ENCODE measurements at regions of chr10 and their contacts with region 1.

Region 1: GRCh38 chr10:60769406-60769805 is 8.9 kb upstream of the CDK1 start:
- DNase-seq: no peak
- ATAC-seq: no peak
- H3K4me3 ChIP-seq: no peak overlapping the region
- H3K4me3 Mint-ChIP-seq: no peak overlapping the region
- H3K27ac ChIP-seq: no peak overlapping the region
- H3K27ac Mint-ChIP-seq: no peak overlapping the region
- H3K4me1 ChIP-seq: no peaks in the 10 kb centered on the region
- H3K4me1 Mint-ChIP-seq: peaks cover 0 to 20% (median 14%) of the 10 kb centered on the region in 7 donors
- H3K27me3 ChIP-seq: no peaks in the 10 kb centered on the region
- H3K27me3 Mint-ChIP-seq: peaks cover 0 to 6% (median 0%) of the 10 kb centered on the region in 5 donors

Region 2: DNA sequence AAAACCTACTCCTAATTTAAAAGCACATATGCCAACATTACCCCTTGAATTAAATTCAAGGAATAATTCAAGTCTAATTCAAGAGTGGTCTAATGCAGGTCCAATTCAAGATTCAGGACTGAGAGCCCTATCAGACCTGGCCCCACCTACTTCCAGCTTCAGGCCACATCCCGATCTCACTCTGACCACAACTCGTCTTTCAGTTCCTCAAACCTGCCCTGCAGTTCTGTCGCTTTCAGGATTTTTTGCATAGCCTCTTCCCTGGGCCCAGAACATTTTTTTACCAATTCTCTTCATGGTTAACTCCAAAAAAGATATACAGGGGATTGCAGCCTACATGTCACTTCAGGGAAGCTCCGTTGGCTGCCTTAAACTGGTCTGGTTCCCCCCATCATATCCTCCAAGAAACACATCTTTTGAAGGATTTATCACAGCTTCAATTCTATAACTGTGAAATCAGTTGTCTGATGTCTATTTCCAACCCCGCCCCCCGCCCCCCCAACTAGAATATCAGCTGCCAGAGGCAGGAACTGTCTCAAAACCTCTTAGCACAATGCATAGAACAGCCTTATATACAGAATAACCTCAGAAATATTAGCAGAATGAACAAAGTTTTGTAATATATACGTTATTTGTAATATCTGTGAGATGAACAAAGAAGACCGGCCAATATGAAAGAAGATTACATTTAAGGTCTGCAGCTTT is 883.8 kb before region 1 on chr10:
- CTCF ChIA-PET with region 1: no interaction called
- POLR2A ChIA-PET with region 1: no interaction called
- intact Hi-C with region 1: no loop called
- DNase-seq: no peak
- ATAC-seq: peak; percentile 70
- H3K4me3 ChIP-seq: no peak overlapping the region
- H3K4me3 Mint-ChIP-seq: peak overlapping the region in 9 of 10 donors; percentile 11 to 66 (median 39)
- H3K27ac ChIP-seq: no peak overlapping the region
- H3K27ac Mint-ChIP-seq: peak overlapping the region in 4 of 9 donors; percentile 40 to 84 (median 62)
- H3K4me1 ChIP-seq: peaks cover 42 to 43% of the 10 kb centered on the region in 2 donors
- H3K4me1 Mint-ChIP-seq: peaks cover 56 to 90% (median 85%) of the 10 kb centered on the region in 7 donors
- H3K27me3 ChIP-seq: no peaks in the 10 kb centered on the region
- H3K27me3 Mint-ChIP-seq: no peaks in the 10 kb centered on the region

Region 3: GRCh38 chr10:60099998-60100747 is 669.2 kb before region 1 on chr10:
- CTCF ChIA-PET with region 1: interaction called, 4 read pairs
- POLR2A ChIA-PET with region 1: no interaction called
- intact Hi-C with region 1: loop called (anchors 1 to 2 kb)
- DNase-seq: peak in 6 of 9 donors; percentile 14 to 43 (median 31)
- ATAC-seq: peak; percentile 69
- H3K4me3 ChIP-seq: no peak overlapping the region
- H3K4me3 Mint-ChIP-seq: no peak overlapping the region
- H3K27ac ChIP-seq: no peak overlapping the region
- H3K27ac Mint-ChIP-seq: no peak overlapping the region
- H3K4me1 ChIP-seq: no peaks in the 10 kb centered on the region
- H3K4me1 Mint-ChIP-seq: no peaks in the 10 kb centered on the region
- H3K27me3 ChIP-seq: no peaks in the 10 kb centered on the region
- H3K27me3 Mint-ChIP-seq: no peaks in the 10 kb centered on the region

Region 4: GRCh38 chr10:60444494-60445064 is 324.8 kb before region 1 on chr10:
- CTCF ChIA-PET with region 1: interaction called, 3 read pairs
- POLR2A ChIA-PET with region 1: no interaction called
- intact Hi-C with region 1: loop called (anchors 1 kb)
- DNase-seq: no peak
- ATAC-seq: no peak
- H3K4me3 ChIP-seq: no peak overlapping the region
- H3K4me3 Mint-ChIP-seq: no peak overlapping the region
- H3K27ac ChIP-seq: no peak overlapping the region
- H3K27ac Mint-ChIP-seq: no peak overlapping the region
- H3K4me1 ChIP-seq: peaks cover 0 to 11% of the 10 kb centered on the region in 2 donors
- H3K4me1 Mint-ChIP-seq: peaks cover 12 to 34% (median 20%) of the 10 kb centered on the region in 7 donors
- H3K27me3 ChIP-seq: no peaks in the 10 kb centered on the region
- H3K27me3 Mint-ChIP-seq: no peaks in the 10 kb centered on the region

Region 5: GRCh38 chr10:60549686-60550085 is 219.7 kb before region 1 on chr10:
- CTCF ChIA-PET with region 1: no interaction called
- POLR2A ChIA-PET with region 1: no interaction called
- intact Hi-C with region 1: loop called (anchors 1 kb)
- DNase-seq: peak in 2 of 9 donors; percentile 11 to 25
- ATAC-seq: no peak
- H3K4me3 ChIP-seq: no peak overlapping the region
- H3K4me3 Mint-ChIP-seq: no peak overlapping the region
- H3K27ac ChIP-seq: no peak overlapping the region
- H3K27ac Mint-ChIP-seq: no peak overlapping the region
- H3K4me1 ChIP-seq: no peaks in the 10 kb centered on the region
- H3K4me1 Mint-ChIP-seq: peaks cover 0 to 8% (median 0%) of the 10 kb centered on the region in 7 donors
- H3K27me3 ChIP-seq: no peaks in the 10 kb centered on the region
- H3K27me3 Mint-ChIP-seq: no peaks in the 10 kb centered on the region

Region 6: DNA sequence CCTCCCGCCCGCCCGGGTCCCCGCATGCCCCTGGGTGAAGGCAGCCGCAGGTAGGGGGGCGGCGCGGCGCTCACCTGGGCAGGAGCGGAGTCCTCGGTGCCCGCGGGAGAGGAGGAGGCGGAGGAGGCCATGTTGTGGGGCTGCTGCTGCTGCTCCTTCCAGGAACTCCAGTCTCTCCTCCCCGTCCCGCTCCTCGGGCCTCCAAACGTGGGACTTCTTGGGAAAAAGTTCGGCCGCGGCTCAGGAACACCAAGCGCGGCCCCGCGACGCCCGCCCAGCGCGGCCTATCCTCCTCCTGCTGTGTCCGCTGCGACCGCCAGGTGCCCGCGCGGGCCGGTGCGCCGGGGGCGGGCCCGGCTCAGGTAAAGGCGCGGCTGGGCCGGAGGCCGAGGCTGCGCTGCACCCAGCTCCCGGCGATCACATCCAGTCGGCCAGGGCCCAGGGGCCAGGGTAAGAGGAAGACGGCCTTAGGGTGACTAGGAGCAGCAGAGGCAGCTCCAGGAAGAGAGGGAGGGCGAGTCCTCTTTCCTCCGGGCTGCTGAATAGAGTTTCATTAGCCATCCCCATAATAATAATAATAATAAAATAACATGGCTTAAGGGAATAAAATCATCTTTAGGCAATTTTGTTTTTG is 36.1 kb before region 1 on chr10:
- CTCF ChIA-PET with region 1: no interaction called
- POLR2A ChIA-PET with region 1: interaction called, 3 read pairs
- intact Hi-C with region 1: loop called (anchors 2 kb)
- DNase-seq: peak; percentile 29 to 66 (median 55)
- ATAC-seq: peak; percentile 80
- H3K4me3 ChIP-seq: peak overlapping the region; percentile 63
- H3K4me3 Mint-ChIP-seq: peak overlapping the region; percentile 59 to 96 (median 80)
- H3K27ac ChIP-seq: peak overlapping the region; percentile 89
- H3K27ac Mint-ChIP-seq: peak overlapping the region in 7 of 9 donors; percentile 33 to 98 (median 58)
- H3K4me1 ChIP-seq: peaks cover 17 to 35% of the 10 kb centered on the region in 2 donors
- H3K4me1 Mint-ChIP-seq: peaks cover 15 to 39% (median 31%) of the 10 kb centered on the region in 7 donors
- H3K27me3 ChIP-seq: no peaks in the 10 kb centered on the region
- H3K27me3 Mint-ChIP-seq: peaks cover 0 to 7% (median 2%) of the 10 kb centered on the region in 5 donors